Heart right ventricle (tissue), 16 donors: ENCODE measurements at regions of chr6 and their contacts with region 1.

Region 1: DNA sequence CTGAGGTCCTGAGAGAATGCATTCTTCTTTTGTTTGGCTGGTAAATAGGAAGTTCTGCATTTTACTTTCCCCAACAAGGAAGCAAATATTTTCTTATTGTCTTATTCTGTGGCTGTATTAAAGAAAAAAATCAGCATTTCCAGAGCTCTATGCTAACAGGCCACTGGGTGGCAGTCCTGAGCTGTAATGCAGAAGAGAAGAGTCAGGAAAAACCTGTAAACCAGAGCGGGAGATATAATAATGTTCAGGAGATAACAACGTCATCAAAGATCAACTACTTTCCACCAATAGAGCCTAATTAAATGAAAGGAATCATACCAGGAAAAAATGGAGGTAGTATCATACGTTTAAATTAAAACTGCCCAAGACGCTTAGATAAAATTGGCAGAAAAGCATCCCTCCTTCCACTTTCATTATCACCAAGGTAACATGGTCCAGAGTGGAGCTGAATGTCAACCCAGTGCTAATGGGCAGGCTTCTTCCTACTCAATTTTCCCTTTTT is 55.6 kb upstream of the CARMIL1 start:
- DNase-seq: peak; percentile 56 to 68
- ATAC-seq: peak in 6 of 8 donors; percentile 64 to 79 (median 75)
- H3K4me3 ChIP-seq: peak overlapping the region in 7 of 10 donors; percentile 6 to 37 (median 34)
- H3K27ac ChIP-seq: peak overlapping the region in 6 of 10 donors; percentile 5 to 59 (median 22)
- H3K4me1 ChIP-seq: peaks cover 0 to 42% (median 16%) of the 10 kb centered on the region in 9 donors
- H3K27me3 ChIP-seq: peaks cover 0 to 2% (median 0%) of the 10 kb centered on the region in 7 donors
- CTCF ChIP-seq: peak; percentile 82 to 96 (median 87)

Region 2: DNA sequence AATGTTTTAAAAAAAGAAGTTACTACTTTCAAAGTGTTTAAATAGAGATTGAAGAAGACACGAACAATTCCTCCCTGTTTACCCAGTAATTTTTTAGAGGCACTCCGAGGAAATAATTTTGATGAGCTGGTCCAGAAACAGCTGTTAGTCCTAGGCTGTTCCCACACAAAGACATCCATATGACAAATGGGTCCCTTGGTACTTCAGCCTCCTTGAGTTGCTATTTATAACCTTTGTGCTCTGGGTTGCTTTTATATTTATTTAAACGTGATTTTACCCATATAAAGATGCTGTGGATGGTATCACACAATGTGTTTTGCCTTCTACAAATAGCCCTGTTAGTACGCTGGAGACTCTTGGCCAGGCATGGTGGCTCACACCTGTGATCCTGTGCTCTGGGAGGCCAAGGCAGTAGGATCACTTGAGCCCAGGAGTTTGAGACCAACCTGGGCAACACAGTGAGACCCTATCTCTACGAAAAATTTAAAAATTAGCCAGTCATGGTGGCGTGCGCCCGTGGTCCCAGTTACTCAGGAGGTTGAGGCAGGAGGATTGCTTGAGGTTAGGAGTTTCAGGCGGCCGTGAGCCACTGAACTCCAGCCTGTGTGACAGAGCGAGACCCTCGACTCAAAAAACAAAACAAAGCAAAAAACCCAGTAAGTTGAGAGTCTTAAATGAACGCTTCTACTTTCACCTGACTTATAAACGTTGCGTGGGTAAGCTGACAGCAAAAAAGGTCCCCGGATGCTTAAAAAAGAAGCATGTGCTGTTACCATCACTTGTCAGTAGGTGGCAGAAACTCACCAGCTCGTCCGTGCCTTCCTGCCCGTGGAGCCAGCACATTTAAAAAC is 367.9 kb before region 1 on chr6:
- intact Hi-C with region 1: loop called in 1 of 10 experiments (anchors 2 kb)
- DNase-seq: peak; percentile 21 to 63
- ATAC-seq: peak; percentile 55 to 86 (median 70)
- H3K4me3 ChIP-seq: peak overlapping the region in 1 of 10 donors; percentile 4
- H3K27ac ChIP-seq: peak overlapping the region in 5 of 10 donors; percentile 3 to 88 (median 50)
- H3K4me1 ChIP-seq: peaks cover 0 to 56% (median 16%) of the 10 kb centered on the region in 9 donors
- H3K27me3 ChIP-seq: no peaks in the 10 kb centered on the region
- CTCF ChIP-seq: peak; percentile 83 to 96 (median 89)

Region 3: DNA sequence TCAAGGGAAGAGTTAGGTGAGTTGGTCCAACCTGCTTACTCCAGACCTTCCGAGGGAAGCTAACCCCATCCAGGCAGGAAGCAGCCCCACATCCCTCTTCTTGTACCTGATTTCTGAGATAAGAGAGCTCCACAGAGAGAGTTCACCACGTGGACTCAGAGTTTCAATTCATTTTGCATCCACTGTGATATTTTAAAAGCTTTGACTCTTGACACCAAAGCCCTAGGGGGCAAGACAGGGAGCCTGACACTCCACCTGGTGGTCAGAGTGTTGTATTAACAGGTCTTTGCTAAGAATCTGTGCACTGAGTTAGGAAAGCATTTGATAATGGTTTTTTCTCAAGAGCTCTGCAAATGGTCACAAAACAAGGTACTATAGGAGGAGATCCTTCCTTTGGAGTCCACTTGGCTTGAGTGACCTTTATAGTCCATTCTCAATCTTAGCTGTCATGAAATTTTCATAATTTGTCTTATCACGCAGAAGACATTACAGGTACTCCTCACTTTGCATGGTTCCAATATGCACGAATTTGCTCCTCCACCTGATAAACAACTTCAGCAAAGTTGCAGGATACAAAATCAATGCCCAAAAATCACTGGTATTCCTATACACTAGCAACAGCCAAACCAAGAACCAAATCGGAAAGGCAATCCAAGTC is 231.6 kb before region 1 on chr6:
- intact Hi-C with region 1: no loop called
- DNase-seq: peak; percentile 17 to 42
- ATAC-seq: peak in 6 of 8 donors; percentile 73 to 87 (median 80)
- H3K4me3 ChIP-seq: no peak overlapping the region
- H3K27ac ChIP-seq: peak overlapping the region in 1 of 10 donors; percentile 57
- H3K4me1 ChIP-seq: peaks cover 0 to 22% (median 0%) of the 10 kb centered on the region in 9 donors
- H3K27me3 ChIP-seq: no peaks in the 10 kb centered on the region
- CTCF ChIP-seq: peak; percentile 52 to 84 (median 81)

Region 4: GRCh38 chr6:25085756-25086155 is 137.8 kb before region 1 on chr6:
- intact Hi-C with region 1: loop called in 1 of 10 experiments (anchors 5 kb)
- DNase-seq: peak in 1 of 2 donors; percentile 33
- ATAC-seq: peak; percentile 70 to 92 (median 86)
- H3K4me3 ChIP-seq: no peak overlapping the region
- H3K27ac ChIP-seq: peak overlapping the region in 9 of 10 donors; percentile 1 to 77 (median 66)
- H3K4me1 ChIP-seq: peaks cover 0 to 65% (median 36%) of the 10 kb centered on the region in 9 donors
- H3K27me3 ChIP-seq: no peaks in the 10 kb centered on the region
- CTCF ChIP-seq: no peak

Region 5: DNA sequence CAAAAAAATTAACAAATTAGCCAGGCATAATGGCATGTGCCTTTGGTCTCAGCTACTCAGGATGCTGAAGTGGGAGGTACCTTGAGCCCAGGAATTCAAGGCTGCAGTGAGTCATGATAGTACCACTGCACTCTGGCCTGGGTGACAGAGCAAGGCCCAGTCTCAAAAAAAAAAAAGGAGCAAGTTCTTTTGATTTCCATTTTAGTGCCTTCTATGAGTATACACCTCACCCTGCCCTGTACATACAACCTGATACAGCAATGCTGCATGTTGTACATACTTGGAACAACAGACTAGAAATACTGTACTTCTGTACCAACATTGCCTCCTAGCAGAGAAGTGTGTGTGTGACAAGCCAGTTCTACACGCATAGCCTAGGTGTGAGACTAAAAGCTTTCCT is 41.6 kb before region 1 on chr6:
- intact Hi-C with region 1: no loop called
- DNase-seq: no peak
- ATAC-seq: peak in 1 of 8 donors; percentile 47
- H3K4me3 ChIP-seq: no peak overlapping the region
- H3K27ac ChIP-seq: peak overlapping the region in 1 of 10 donors; percentile 24
- H3K4me1 ChIP-seq: peaks cover 0 to 41% (median 14%) of the 10 kb centered on the region in 9 donors
- H3K27me3 ChIP-seq: no peaks in the 10 kb centered on the region
- CTCF ChIP-seq: no peak

Region 6: DNA sequence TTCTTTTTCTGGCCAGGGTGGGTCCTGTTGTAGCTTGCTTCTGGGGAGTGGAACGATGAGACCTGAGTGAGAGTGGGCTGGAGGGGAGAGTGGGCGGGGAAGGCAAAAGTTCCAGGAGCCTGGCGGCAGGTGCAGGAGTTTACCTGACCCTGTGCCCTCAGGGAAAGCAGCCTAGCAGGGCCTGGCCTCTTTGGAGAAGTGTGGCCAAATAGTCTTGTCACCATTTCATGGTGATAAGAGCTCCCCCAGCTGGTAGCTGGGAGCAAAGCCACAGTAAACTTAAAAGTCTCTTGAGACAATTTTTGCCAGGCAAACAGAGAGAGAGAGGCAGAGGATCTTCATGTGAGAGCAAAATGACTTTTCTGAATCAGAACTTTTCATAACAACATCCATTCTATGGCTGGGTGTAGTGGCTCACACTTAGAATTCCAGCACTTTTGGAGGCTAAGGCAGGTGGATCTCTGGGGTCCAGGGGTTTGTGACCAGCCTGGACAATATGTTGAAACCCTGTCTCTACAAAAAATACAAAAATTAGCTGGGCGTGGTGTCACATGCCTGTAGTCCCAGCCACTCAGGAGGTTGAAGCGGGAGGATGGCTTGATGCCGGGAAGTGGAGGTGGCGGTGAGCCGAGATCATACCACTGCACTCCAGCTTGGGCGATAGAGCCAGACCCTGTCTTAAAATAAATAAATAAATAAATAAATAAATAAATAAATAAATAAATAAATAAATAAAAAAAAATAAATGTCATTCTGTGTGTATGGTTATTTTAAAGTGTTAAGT is 266.7 kb after region 1 on chr6:
- intact Hi-C with region 1: loop called in 2 of 10 experiments (anchors 5 kb)
- DNase-seq: peak; percentile 37 to 74
- ATAC-seq: peak; percentile 83 to 90 (median 86)
- H3K4me3 ChIP-seq: no peak overlapping the region
- H3K27ac ChIP-seq: peak overlapping the region in 1 of 10 donors; percentile 25
- H3K4me1 ChIP-seq: peaks cover 0 to 26% (median 20%) of the 10 kb centered on the region in 9 donors
- H3K27me3 ChIP-seq: no peaks in the 10 kb centered on the region
- CTCF ChIP-seq: peak; percentile 48 to 87 (median 80)

Region 7: DNA sequence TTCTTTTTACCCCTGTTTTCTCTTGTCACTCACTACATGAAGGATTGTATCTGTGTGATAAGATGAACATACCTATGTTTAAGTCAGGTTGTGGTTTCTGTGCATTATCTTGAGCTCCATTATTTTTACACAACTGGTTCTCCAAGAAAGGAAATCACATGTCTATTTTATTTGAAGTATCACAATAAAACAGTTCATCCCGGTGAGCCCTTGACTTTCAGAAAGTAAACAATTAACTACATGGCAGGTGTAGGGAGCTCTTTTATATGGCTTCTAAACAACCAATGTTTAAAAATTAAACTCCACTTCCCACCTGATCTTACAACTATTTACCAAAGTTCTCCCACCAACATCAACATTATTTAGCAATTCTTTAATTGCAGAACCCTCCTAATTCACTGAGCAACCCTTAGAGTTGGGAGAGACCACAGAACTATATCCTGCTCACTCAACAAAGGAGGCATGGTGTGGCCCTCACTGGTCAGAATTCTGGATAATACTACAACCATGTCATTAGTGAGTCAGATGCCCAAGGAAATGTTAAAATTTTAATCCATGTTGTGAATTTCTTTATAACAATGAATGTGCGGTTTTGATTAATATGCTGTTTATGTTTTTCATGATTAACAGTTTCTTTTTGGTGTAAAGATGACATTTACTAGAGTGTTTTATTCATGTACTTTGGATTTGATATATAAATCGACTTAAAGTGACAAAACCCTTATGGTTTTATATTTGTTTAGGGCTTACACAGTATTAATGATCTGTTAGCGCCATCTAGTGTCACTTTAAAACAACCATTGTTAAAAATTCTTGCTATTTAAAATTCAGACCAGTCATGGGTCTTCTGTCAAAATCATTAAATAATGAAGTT is 378.5 kb after region 1 on chr6:
- intact Hi-C with region 1: loop called in 2 of 10 experiments (anchors 5 kb)
- DNase-seq: no peak
- ATAC-seq: no peak
- H3K4me3 ChIP-seq: no peak overlapping the region
- H3K27ac ChIP-seq: no peak overlapping the region
- H3K4me1 ChIP-seq: no peaks in the 10 kb centered on the region
- H3K27me3 ChIP-seq: peaks cover 0 to 5% (median 0%) of the 10 kb centered on the region in 7 donors
- CTCF ChIP-seq: peak; percentile 26 to 76 (median 59)

Region 8: DNA sequence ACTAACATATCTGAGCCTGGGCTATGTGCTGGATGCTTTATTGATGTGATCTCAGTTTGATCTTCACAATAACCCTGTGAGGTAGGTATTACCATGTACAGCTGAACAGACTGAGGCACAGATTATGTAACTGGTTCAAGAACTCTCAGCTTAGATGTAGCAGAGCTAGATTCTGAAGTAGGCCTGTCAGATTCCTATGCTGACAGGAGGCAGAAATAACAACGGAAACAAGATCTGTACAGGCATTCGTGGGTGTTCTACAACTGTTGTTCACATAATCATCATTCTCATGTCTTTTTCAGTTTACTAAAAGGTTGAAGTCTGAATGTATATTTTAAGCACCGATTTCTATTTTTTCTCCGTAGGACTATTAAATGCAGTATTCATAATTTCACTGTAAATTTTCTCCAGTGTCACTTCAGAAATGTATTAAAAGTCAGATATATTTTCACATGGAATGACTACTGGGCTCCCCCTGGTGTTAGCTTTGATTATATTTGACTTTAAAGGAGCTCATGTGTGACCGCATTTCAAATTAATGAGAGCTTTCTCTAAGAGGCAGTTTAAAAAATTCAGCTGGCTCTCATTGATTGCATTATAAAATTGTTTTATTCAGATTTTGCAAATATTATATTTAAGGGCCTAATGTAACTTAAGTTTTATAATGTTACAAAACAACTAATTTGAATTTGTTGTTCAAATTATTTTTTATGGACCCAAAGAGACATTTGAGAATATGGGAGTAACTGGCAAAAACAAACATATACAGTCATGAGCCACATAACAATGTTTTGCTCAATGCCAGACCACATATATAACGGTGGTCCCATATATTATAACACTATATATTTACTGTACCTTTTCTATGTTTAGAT is 494.6 kb after region 1 on chr6:
- intact Hi-C with region 1: loop called in 3 of 10 experiments (anchors 5 to 10 kb)
- DNase-seq: no peak
- ATAC-seq: no peak
- H3K4me3 ChIP-seq: no peak overlapping the region
- H3K27ac ChIP-seq: no peak overlapping the region
- H3K4me1 ChIP-seq: no peaks in the 10 kb centered on the region
- H3K27me3 ChIP-seq: peaks cover 0 to 24% (median 0%) of the 10 kb centered on the region in 7 donors
- CTCF ChIP-seq: peak in 8 of 9 donors; percentile 13 to 67 (median 54)

Region 9: DNA sequence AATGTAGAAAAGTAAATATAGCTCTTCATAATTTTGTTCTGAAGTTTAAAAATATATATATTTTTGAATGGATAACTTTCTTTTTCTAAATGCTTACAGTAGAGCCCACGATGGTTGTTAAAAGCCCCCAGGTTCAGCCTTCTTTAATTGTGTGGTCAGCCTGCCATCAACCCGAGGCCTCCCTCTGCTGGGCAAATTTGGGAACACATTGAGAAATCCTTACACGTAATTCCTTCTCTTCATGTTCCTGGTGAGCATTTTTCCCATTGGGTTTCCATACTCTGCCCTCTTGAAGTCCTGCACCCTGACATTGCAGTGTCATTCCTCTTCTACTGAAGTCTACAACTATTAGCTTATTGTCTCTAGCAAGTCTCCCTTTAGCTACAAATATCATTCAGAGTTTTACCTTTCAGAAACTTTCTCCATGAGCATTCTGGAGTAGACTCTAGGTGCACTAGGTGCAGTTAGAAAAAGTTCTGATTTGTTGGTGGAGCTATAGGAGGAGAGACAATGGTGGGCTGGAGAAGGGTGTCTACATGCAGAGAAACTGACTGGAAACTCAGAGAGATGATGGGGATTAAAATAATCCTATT is 779.7 kb after region 1 on chr6:
- intact Hi-C with region 1: no loop called
- DNase-seq: peak; percentile 17 to 73
- ATAC-seq: peak in 7 of 8 donors; percentile 33 to 70 (median 61)
- H3K4me3 ChIP-seq: no peak overlapping the region
- H3K27ac ChIP-seq: no peak overlapping the region
- H3K4me1 ChIP-seq: peaks cover 0 to 10% (median 0%) of the 10 kb centered on the region in 9 donors
- H3K27me3 ChIP-seq: no peaks in the 10 kb centered on the region
- CTCF ChIP-seq: peak; percentile 66 to 89 (median 82)